Right ventricle myocardium inferior (tissue), 1 donor: ENCODE measurements at regions of chr11 and their contacts with region 1.

Region 1: DNA sequence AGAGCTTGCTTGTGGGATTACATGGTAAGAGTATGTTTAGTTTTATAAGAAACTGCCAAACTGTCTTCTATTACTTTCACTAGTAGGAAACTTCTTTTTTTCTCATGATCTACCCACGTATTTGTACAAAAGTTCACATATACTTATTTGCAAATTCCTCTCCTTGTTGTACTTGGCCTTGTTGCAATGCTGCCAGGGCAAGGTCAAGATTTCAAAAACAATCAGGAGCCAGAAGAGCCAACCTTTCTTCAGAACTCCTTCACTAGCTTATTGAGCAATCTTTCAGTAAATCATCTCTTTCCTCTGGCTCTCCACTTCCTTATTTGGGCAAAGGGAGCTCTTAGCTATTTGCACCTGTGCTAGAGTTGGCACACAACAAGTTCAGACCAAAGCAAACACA is 9.7 kb downstream of the SRSF8 start:
- DNase-seq: no peak
- ATAC-seq: no peak

Region 2: DNA sequence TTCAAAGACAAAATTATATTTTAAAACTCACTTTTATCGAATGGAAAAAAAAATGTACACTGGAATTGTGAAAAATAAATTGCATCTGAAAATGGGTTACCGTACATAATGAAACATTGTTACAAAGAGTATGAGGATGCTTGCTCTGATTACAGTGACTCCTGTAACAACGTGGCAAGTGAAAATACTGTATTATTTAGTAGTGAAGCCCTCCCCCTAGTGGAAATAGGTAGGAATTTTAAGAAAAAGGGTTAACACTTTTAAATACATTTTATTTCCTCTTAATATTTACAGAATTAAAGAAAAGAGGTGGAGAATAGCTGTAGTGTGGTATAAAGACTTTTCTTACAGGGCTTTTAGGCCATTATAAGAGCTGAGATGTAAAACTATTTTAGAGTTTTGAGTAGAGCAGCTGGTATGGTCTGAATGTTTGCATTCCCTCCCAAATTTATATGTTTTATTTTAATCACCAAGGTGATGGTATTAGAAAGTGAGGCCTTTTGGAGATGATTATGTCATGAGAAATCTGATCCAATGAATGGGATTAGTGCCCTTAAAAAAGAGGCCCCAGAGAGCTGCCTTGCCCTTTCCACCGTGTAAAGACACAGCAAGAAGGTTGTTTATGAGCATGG is 688.0 kb after region 1 on chr11:
- intact Hi-C with region 1: loop called (anchors 5 kb)
- DNase-seq: no peak
- ATAC-seq: no peak